ENCODE measurements at regions of chr13 and their contacts with region 1.

Region 1: GRCh38 chr13:72696579-72696978 is 30.9 kb downstream of the MZT1 start:
- DNase-seq: no peak
- H3K4me3 ChIP-seq: no peak overlapping the region
- H3K27ac ChIP-seq: no peak overlapping the region
- H3K4me1 ChIP-seq: no peaks in the 10 kb centered on the region
- H3K27me3 ChIP-seq: no peaks in the 10 kb centered on the region
- CTCF ChIP-seq: peak; percentile 62

Region 2: GRCh38 chr13:70960841-70961443 is 1735.6 kb before region 1 on chr13:
- CTCF ChIA-PET with region 1: no interaction called
- POLR2A ChIA-PET with region 1: no interaction called
- intact Hi-C with region 1: loop called (anchors 5 kb)
- DNase-seq: peak in 1 of 2 experiments; percentile 3
- H3K4me3 ChIP-seq: no peak overlapping the region
- H3K27ac ChIP-seq: no peak overlapping the region
- H3K4me1 ChIP-seq: no peaks in the 10 kb centered on the region
- H3K27me3 ChIP-seq: no peaks in the 10 kb centered on the region
- CTCF ChIP-seq: peak; percentile 68

Region 3: GRCh38 chr13:71240911-71241310 is 1455.7 kb before region 1 on chr13:
- CTCF ChIA-PET with region 1: no interaction called
- POLR2A ChIA-PET with region 1: no interaction called
- intact Hi-C with region 1: loop called (anchors 5 kb)
- DNase-seq: no peak
- H3K4me3 ChIP-seq: no peak overlapping the region
- H3K27ac ChIP-seq: no peak overlapping the region
- H3K4me1 ChIP-seq: no peaks in the 10 kb centered on the region
- H3K27me3 ChIP-seq: no peaks in the 10 kb centered on the region
- CTCF ChIP-seq: no peak; the same call in 1 of the 2 replicates

Region 4: GRCh38 chr13:72653506-72653905 is 43.1 kb before region 1 on chr13:
- CTCF ChIA-PET with region 1: interaction called, 12 read pairs
- POLR2A ChIA-PET with region 1: no interaction called
- intact Hi-C with region 1: no loop called
- DNase-seq: no peak
- H3K4me3 ChIP-seq: no peak overlapping the region
- H3K27ac ChIP-seq: no peak overlapping the region
- H3K4me1 ChIP-seq: no peaks in the 10 kb centered on the region
- H3K27me3 ChIP-seq: no peaks in the 10 kb centered on the region
- CTCF ChIP-seq: no peak

Region 5: GRCh38 chr13:72875233-72875632 is 178.7 kb after region 1 on chr13:
- CTCF ChIA-PET with region 1: no interaction called
- POLR2A ChIA-PET with region 1: no interaction called
- intact Hi-C with region 1: no loop called
- DNase-seq: no peak
- H3K4me3 ChIP-seq: no peak overlapping the region
- H3K27ac ChIP-seq: no peak overlapping the region
- H3K4me1 ChIP-seq: no peaks in the 10 kb centered on the region
- H3K27me3 ChIP-seq: no peaks in the 10 kb centered on the region
- CTCF ChIP-seq: no peak

Measured in PC-9 (cell line).